CD4-positive, alpha-beta T cell (primary cell): ENCODE measurements at regions of chr3 and their contacts with region 1.

Region 1: DNA sequence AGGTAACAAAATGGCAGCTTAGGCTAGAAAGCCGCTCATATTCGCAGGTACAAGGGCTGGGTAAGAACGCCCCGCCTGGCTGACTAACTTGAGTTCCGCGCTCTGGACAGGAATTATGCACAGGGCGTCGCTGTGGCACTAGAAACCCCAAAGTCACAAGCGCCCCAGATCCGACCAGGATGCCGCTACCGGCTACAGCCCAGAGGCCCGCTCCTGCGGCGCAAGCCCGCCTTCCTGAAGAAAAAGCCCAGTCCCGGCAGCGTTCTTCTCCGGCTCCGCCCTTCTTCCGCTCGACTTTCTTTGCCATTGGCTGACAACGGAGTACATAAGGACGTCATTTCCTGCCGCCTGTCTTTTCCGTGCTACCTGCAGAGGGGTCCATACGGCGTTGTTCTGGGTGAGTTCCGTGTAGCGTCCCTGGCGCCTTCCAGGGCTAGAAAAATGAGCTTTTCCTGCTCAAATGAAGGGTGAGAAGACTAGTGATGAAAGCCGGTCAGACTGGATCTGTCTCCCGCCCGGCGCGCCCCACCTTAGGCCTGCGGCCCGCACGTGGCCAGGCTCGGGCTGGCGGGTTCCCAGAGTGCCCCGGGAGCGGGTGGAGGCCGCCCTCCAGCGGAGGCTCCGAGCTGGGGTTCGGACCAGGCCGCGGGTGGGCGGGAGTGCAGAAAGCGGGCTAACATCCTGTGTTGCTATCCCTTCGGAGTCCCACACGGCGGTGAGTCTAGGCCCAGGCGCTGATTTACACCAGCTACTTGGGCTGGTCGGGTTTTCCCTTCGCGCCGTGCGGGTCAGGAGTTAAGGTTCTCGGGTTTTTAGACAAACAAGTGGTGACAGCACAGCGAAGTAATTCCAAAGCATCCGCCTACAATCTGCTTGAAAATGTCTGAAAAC is at the start of gene RPSA:
- DNase-seq: peak; percentile 90 to 99 (median 94)
- ATAC-seq: peak; percentile 90
- H3K4me3 ChIP-seq: peak within 1 kb of the TSS; percentile 78
- H3K4me3 Mint-ChIP-seq: peak within 1 kb of the TSS; percentile 86
- H3K27ac ChIP-seq: peak within 1 kb of the TSS; percentile 76 to 88
- H3K27ac Mint-ChIP-seq: peak within 1 kb of the TSS; percentile 88
- H3K4me1 ChIP-seq: peaks cover 38% of the 10 kb centered on the region
- H3K4me1 Mint-ChIP-seq: peaks cover 48% of the 10 kb centered on the region
- H3K27me3 ChIP-seq: no peaks in the 10 kb centered on the region
- H3K27me3 Mint-ChIP-seq: no peaks in the 10 kb centered on the region
- CTCF ChIP-seq: peak; percentile 27
- total RNA-seq, gene RPSA: 1,930 to 1,974 TPM

Region 2: GRCh38 chr3:38095669-38096483 is 1310.7 kb before region 1 on chr3:
- CTCF ChIA-PET with region 1: no interaction called
- POLR2A ChIA-PET with region 1: no interaction called
- intact Hi-C with region 1: no loop called
- DNase-seq: no peak
- ATAC-seq: no peak
- H3K4me3 ChIP-seq: no peak overlapping the region
- H3K4me3 Mint-ChIP-seq: no peak overlapping the region
- H3K27ac ChIP-seq: no peak overlapping the region
- H3K27ac Mint-ChIP-seq: no peak overlapping the region
- H3K4me1 ChIP-seq: no peaks in the 10 kb centered on the region
- H3K4me1 Mint-ChIP-seq: no peaks in the 10 kb centered on the region
- H3K27me3 ChIP-seq: no peaks in the 10 kb centered on the region
- H3K27me3 Mint-ChIP-seq: no peaks in the 10 kb centered on the region
- CTCF ChIP-seq: no peak

Region 3: DNA sequence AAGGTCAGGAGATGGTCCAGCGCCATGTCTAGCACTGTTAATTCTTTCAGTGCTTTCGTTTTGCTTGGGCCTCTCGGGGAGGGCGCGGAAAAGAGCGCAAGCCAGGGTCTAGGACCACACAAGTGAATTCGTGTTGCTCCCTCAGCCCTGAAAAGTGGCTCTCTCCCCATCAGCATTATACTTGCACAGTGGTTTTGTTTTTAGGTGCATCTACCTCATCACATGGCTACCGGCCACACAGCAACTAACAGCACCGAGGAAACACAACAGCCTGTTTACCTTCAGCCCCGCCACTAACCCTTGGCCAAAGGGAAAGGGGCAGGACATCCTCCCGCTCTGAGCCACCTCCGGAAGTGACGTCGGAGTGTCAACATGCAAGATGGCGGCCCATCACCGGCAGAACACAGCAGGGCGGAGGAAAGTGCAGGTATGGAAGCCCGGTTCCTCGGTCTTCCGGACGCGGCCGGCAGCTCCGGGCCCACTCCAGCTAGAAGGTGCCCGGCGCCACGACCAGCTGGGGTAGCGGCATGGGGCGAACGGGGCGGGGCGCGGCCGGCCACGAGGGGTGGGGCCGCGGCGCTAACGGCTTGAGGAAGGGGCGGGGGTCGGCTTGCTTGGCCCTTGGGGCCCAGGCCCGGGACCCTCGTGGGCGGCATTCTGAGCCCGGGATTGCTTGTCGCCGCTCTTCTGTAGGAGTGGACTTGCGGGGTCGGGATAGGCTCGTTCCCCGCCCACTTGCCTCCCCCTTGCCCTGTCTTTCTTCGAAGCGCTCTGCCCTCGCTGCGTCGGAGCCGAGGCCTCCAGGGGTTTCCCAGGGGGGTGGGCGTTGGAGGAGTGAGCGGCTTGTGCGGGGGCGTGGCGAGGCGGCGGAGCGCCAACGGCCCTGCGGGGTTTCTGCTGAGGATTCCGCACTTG is 354.7 kb before region 1 on chr3 and contains the starts of genes SCN11A and WDR48:
- CTCF ChIA-PET with region 1: no interaction called
- POLR2A ChIA-PET with region 1: interaction called, 4 read pairs
- intact Hi-C with region 1: loop called in 1 of 2 experiments (anchors 5 kb)
- DNase-seq: peak; percentile 85 to 97 (median 90)
- ATAC-seq: peak; percentile 89
- H3K4me3 ChIP-seq: peak within 1 kb of the TSS; percentile 84
- H3K4me3 Mint-ChIP-seq: peak within 1 kb of the TSS; percentile 95
- H3K27ac ChIP-seq: peak within 1 kb of the TSS; percentile 90 to 95
- H3K27ac Mint-ChIP-seq: peak within 1 kb of the TSS; percentile 99
- H3K4me1 ChIP-seq: peaks cover 25% of the 10 kb centered on the region
- H3K4me1 Mint-ChIP-seq: peaks cover 72% of the 10 kb centered on the region
- H3K27me3 ChIP-seq: no peaks in the 10 kb centered on the region
- H3K27me3 Mint-ChIP-seq: no peaks in the 10 kb centered on the region
- CTCF ChIP-seq: no peak
- total RNA-seq, gene SCN11A: 0.08 TPM in 1 of 2 experiments, not detected in the other
- total RNA-seq, gene WDR48: 81.2 to 88.6 TPM

Region 4: GRCh38 chr3:39383045-39383880 is 23.4 kb before region 1 on chr3 and contains the start of gene SLC25A38:
- CTCF ChIA-PET with region 1: interaction called, 15 read pairs
- POLR2A ChIA-PET with region 1: interaction called, 34 read pairs
- intact Hi-C with region 1: loop called (anchors 1 kb)
- DNase-seq: peak; percentile 58 to 94 (median 75)
- ATAC-seq: peak; percentile 82
- H3K4me3 ChIP-seq: peak within 1 kb of the TSS; percentile 95
- H3K4me3 Mint-ChIP-seq: peak within 1 kb of the TSS; percentile 94
- H3K27ac ChIP-seq: peak within 1 kb of the TSS; percentile 93 to 97
- H3K27ac Mint-ChIP-seq: peak within 1 kb of the TSS; percentile 97
- H3K4me1 ChIP-seq: peaks cover 53% of the 10 kb centered on the region
- H3K4me1 Mint-ChIP-seq: peaks cover 55% of the 10 kb centered on the region
- H3K27me3 ChIP-seq: no peaks in the 10 kb centered on the region
- H3K27me3 Mint-ChIP-seq: no peaks in the 10 kb centered on the region
- CTCF ChIP-seq: peak; percentile 59
- total RNA-seq, gene SLC25A38: 43.2 to 44.7 TPM

Region 5: DNA sequence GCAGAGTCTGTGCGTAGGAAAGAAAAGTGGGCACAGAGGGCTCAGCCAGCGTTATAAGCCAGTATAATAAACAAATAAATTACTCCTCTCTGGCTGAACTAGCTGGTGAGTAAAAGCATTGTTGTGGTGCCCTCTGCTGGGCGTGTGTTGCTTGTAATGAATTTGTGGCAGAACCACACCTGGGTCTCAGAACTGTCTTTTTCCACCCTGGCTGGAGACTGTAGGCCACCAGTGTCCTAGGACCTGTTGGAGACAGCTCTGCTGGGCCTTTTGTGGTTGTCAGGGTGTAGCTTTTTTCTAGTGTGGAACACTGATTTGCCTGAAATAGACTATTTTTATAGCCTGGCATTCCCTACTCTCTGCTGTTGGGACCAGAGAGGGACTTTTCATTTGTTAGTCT is 772.4 kb after region 1 on chr3:
- CTCF ChIA-PET with region 1: no interaction called
- POLR2A ChIA-PET with region 1: no interaction called
- intact Hi-C with region 1: loop called in 1 of 2 experiments (anchors 5 kb)
- DNase-seq: peak; percentile 19 to 58 (median 38)
- ATAC-seq: no peak
- H3K4me3 ChIP-seq: no peak overlapping the region
- H3K4me3 Mint-ChIP-seq: no peak overlapping the region
- H3K27ac ChIP-seq: no peak overlapping the region
- H3K27ac Mint-ChIP-seq: no peak overlapping the region
- H3K4me1 ChIP-seq: no peaks in the 10 kb centered on the region
- H3K4me1 Mint-ChIP-seq: no peaks in the 10 kb centered on the region
- H3K27me3 ChIP-seq: no peaks in the 10 kb centered on the region
- H3K27me3 Mint-ChIP-seq: no peaks in the 10 kb centered on the region
- CTCF ChIP-seq: peak; percentile 69